Right cardiac atrium (tissue), 5 donors: ENCODE measurements at regions of chr1 and their contacts with region 1.

Region 1: DNA sequence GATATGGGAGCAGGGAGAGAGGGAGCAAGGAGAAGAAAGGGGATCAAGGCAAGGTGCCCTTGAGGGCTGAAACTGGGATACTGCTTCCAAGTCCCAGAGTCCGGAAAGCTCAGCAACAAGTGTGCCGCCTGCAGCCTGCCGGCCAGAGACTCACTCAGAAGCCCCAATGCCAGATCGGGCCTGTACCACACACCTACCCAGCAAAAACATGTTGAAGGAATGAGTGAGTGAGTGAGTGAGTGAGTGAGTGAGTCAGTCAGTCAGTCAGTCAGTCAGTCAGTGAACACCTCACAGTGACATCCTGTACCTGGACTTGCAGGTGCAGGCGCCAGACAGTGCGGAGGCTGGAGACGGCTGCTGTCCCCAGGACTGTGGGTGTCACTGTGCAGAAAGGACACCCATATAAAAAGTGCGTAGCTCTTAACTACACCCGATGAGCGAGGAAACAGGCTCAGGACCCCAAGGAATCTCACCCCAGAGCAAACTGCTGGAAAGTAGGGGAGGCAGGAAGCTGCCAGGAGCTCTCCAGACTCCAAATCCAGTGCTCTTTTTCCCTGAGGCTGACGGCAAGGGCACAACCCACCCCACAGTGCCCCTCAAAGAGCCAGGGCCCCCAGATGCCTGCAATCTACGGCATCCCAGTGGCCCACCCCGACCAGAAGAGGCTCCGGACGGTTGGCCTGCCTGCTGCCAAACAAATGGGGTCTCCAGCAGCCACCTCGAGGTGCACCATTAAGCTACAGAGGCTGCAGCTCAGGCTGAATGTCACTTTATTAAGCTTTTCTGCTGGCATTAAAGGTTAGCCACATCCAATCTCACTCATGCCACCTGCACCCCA is 261.7 kb downstream of the NPHP4 start:
- DNase-seq: no peak
- ATAC-seq: no peak
- H3K4me3 ChIP-seq: no peak overlapping the region
- H3K27ac ChIP-seq: no peak overlapping the region
- H3K4me1 ChIP-seq: no peaks in the 10 kb centered on the region
- H3K27me3 ChIP-seq: no peaks in the 10 kb centered on the region

Region 2: GRCh38 chr1:5648410-5649165 is 81.9 kb before region 1 on chr1:
- intact Hi-C with region 1: loop called in 1 of 4 experiments (anchors 5 kb)
- DNase-seq: no peak
- ATAC-seq: no peak
- H3K4me3 ChIP-seq: no peak overlapping the region
- H3K27ac ChIP-seq: no peak overlapping the region
- H3K4me1 ChIP-seq: peaks cover 6% of the 10 kb centered on the region
- H3K27me3 ChIP-seq: no peaks in the 10 kb centered on the region

Region 3: GRCh38 chr1:5690898-5691297 is 39.6 kb before region 1 on chr1:
- intact Hi-C with region 1: no loop called
- DNase-seq: no peak
- ATAC-seq: no peak
- H3K4me3 ChIP-seq: no peak overlapping the region
- H3K27ac ChIP-seq: no peak overlapping the region
- H3K4me1 ChIP-seq: no peaks in the 10 kb centered on the region
- H3K27me3 ChIP-seq: no peaks in the 10 kb centered on the region

Region 4: GRCh38 chr1:5779598-5780323 is 49.3 kb after region 1 on chr1:
- intact Hi-C with region 1: no loop called
- DNase-seq: peak in 1 of 3 donors; percentile 24
- ATAC-seq: no peak
- H3K4me3 ChIP-seq: no peak overlapping the region
- H3K27ac ChIP-seq: no peak overlapping the region
- H3K4me1 ChIP-seq: no peaks in the 10 kb centered on the region
- H3K27me3 ChIP-seq: no peaks in the 10 kb centered on the region